ENCODE measurements at regions of chr21 and their contacts with region 1.

Region 1: DNA sequence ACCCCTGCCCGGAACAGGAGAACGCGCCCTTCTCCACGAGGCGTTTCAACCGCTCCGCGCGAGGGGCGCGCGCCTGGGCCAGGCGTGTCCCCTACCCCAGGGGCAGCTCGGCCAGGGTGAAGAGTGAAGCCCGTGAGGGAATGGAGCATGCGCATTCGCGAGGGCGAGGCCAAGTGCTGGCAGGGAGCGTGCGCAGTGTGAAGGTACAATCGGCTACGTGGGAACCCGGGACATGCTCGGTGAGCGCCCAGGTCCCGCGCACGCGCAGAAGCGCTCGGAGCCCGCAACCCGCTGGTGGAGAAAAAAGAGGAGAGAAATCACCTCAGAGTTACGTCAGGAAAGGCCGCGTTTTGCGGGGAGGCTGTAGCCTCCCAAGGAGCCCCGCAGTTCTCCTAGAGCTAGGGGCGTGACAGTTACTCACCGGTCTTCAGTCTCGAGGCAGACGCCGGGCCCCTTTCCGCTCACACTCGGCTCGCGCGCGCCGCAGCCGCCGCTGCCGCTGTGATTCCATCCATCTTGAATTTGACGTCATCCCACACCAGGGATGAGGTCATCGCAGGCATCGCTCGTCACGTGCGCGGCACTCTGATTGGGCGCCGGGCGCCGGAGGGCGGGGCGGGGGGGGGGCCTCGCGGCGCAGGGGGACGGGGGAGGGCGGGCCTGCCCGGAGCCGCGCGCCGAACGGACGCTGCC is at the start of gene ZBTB21:
- DNase-seq: peak; percentile 96
- H3K4me3 ChIP-seq: peak within 1 kb of the TSS; percentile 76
- H3K27ac ChIP-seq: peak within 1 kb of the TSS; percentile 97
- H3K27me3 ChIP-seq: no peaks in the 10 kb centered on the region
- CTCF ChIP-seq: no peak

Region 2: GRCh38 chr21:41725421-41726041 is 284.4 kb before region 1 on chr21:
- in situ Hi-C with region 1: no loop called
- DNase-seq: no peak
- H3K4me3 ChIP-seq: no peak overlapping the region
- H3K27ac ChIP-seq: no peak overlapping the region
- H3K27me3 ChIP-seq: no peaks in the 10 kb centered on the region
- CTCF ChIP-seq: no peak

Region 3: GRCh38 chr21:42062236-42063022 is 52.5 kb after region 1 on chr21:
- in situ Hi-C with region 1: no loop called
- DNase-seq: no peak
- H3K4me3 ChIP-seq: no peak overlapping the region
- H3K27ac ChIP-seq: no peak overlapping the region
- H3K27me3 ChIP-seq: no peaks in the 10 kb centered on the region
- CTCF ChIP-seq: no peak

Region 4: DNA sequence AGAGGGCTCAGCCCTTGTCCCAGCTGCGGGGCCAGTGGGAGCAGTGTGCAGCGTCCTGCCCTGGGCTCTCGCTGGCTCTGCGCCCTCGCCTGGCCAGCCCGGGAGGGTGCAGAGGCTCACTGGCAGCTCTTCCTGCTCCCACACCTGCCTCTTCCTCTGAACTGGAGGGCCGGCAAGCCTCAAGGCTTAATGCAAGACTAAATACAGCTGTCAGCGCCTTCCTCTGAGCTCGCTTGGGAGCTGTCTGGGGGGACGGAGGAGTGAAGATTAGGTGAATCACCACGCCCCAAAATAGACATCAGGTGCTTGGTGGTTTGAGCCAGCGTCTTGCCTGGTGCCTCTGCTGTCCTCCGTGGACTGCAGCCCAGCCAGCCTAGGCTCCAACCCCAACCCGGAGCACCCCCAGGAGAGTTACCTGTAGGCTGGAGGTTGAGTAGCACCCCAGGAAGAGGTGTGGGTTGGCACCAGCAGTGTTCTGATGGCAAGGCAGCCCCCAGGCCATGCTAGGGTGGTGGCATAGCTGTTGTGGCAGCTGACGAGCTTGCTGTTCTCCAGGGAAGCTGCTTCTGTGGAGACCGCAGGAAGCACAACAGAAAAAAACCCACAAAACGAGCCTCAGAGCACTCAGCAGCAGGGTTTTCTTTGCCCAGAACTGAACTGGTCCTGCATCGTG is 98.0 kb after region 1 on chr21:
- in situ Hi-C with region 1: loop called (anchors 10 kb)
- DNase-seq: no peak
- H3K4me3 ChIP-seq: no peak overlapping the region
- H3K27ac ChIP-seq: no peak overlapping the region
- H3K27me3 ChIP-seq: no peaks in the 10 kb centered on the region
- CTCF ChIP-seq: peak; percentile 94

Measured in brain microvascular endothelial cell (primary cell).